ENCODE measurements at regions of chr12 and their contacts with region 1.

Region 1: GRCh38 chr12:108182096-108182495 is 53.0 kb downstream of the WSCD2 start:
- H3K4me3 ChIP-seq: no peak overlapping the region
- H3K27ac ChIP-seq: no peak overlapping the region
- H3K4me1 ChIP-seq: no peaks in the 10 kb centered on the region
- CTCF ChIP-seq: no peak

Region 2: DNA sequence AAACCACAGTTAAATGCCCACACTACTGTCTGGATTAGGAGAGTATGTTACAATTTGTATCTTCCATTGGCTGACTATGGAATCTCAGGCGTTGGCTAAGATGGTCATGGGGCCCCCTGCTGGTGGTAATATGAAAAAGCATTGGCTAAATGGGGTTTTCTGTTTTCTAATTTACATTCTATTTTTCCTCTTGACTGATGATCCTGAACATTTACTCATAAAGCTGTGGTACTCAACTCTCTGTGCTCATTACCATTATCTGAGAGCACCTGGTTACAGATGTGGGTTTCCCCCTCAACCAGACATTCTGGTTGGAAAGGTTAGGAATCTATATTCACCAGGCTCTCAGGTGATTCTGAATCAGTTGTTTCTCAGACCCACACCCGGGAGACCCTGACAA is 11.8 kb after region 1 on chr12:
- CTCF ChIA-PET with region 1: interaction called, 10 read pairs
- POLR2A ChIA-PET with region 1: no interaction called
- H3K4me3 ChIP-seq: no peak overlapping the region
- H3K27ac ChIP-seq: no peak overlapping the region
- H3K4me1 ChIP-seq: no peaks in the 10 kb centered on the region
- CTCF ChIP-seq: no peak

Region 3: DNA sequence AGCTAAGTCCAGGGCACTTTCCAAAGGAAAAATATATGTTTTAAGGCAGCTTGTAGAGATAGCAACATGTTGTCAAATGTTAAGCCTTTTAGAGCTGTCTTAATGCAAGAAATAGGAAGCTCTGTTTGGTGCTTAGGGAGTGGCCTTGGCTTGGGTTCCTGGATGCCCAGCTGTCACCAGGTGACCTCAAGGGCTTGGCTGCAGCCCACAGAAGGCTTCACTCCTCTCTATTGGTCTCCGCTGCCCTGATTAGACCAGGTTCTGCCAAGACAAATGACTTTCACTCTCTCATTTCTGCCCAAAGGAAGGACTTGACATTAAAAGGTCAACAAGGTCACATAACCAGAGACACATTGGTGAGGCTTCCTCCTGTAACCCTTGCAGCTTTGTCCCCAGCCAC is 23.8 kb after region 1 on chr12:
- CTCF ChIA-PET with region 1: no interaction called
- POLR2A ChIA-PET with region 1: no interaction called
- H3K4me3 ChIP-seq: no peak overlapping the region
- H3K27ac ChIP-seq: no peak overlapping the region
- H3K4me1 ChIP-seq: no peaks in the 10 kb centered on the region
- CTCF ChIP-seq: no peak

Region 4: DNA sequence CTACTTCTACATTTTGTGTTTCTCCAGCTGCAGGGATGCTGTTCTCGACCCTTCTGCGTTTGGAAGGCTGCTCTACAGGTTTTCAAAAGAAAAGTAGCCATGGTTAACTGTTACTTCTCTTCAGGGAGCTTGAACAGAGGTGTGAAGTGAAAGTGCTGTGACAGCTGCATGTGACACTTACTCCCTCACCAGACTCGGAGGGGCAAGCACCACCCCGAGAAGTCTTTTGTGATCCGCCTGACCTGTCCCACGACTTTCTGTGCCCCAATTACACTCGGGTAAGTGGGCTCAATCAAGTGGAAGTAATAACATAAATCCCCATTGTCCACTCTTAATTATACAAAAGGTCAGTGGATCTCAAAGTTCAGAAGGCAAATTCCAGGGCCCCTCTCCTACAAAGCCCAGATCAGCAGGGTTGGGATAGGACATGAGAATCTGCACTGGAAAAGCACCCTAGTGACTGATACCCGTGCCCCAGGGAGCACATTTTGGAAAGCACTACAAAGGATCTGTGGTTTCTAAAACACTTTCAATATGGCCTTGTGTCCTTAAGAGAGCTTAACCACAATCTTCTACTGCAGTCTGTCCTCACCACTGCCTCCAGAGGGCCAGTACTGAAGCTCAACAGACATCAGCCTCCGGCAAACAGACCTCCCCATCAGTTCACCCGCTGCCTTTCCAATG is 344.5 kb after region 1 on chr12:
- CTCF ChIA-PET with region 1: no interaction called
- POLR2A ChIA-PET with region 1: no interaction called
- H3K4me3 ChIP-seq: no peak overlapping the region
- H3K27ac ChIP-seq: no peak overlapping the region
- H3K4me1 ChIP-seq: no peaks in the 10 kb centered on the region
- CTCF ChIP-seq: no peak